PC-9 (cell line): ENCODE measurements at regions of chr5 and their contacts with region 1.

Region 1: DNA sequence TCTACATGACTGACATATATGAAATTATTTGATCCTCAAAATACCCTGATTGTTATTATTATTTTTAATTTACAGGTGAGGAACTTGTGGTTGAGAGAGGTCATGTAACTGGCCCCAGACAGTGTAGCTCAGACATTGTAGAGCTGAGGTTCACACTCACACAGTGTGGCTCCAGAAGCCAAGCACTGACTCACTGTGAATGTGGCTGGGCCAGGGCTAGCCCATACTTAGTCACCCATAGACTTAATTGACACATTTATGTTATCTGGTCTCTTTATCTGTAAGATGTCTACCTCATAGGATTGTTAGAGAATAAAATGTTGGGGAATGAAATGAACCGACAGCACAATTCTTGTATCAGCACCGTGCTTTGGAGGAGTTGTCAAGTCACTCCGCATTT is 24.9 kb upstream of the CCDC112 start:
- DNase-seq: peak; percentile 11 to 37
- H3K4me3 ChIP-seq: no peak overlapping the region
- H3K27ac ChIP-seq: no peak overlapping the region
- H3K4me1 ChIP-seq: 0 out of 2 replicates have a peak, but pooled peaks cover 5% of the 10 kb centered on the region
- H3K27me3 ChIP-seq: no peaks in the 10 kb centered on the region
- CTCF ChIP-seq: no peak

Region 2: GRCh38 chr5:115366223-115366622 is 44.9 kb after region 1 on chr5:
- CTCF ChIA-PET with region 1: no interaction called
- POLR2A ChIA-PET with region 1: no interaction called
- intact Hi-C with region 1: loop called (anchors 5 kb)
- DNase-seq: peak; percentile 72 to 97
- H3K4me3 ChIP-seq: no peak overlapping the region
- H3K27ac ChIP-seq: no peak overlapping the region
- H3K4me1 ChIP-seq: peaks cover 21% of the 10 kb centered on the region
- H3K27me3 ChIP-seq: no peaks in the 10 kb centered on the region
- CTCF ChIP-seq: no peak

Region 3: GRCh38 chr5:115423541-115423940 is 102.2 kb after region 1 on chr5:
- CTCF ChIA-PET with region 1: no interaction called
- POLR2A ChIA-PET with region 1: interaction called, 11 read pairs
- intact Hi-C with region 1: no loop called
- DNase-seq: peak in 1 of 2 experiments; percentile 60
- H3K4me3 ChIP-seq: no peak overlapping the region
- H3K27ac ChIP-seq: peak overlapping the region; percentile 35; the same call in 1 of the 2 replicates
- H3K4me1 ChIP-seq: peaks cover 40% of the 10 kb centered on the region
- H3K27me3 ChIP-seq: no peaks in the 10 kb centered on the region
- CTCF ChIP-seq: no peak